ENCODE measurements at regions of chr2 and their contacts with region 1.

Region 1: DNA sequence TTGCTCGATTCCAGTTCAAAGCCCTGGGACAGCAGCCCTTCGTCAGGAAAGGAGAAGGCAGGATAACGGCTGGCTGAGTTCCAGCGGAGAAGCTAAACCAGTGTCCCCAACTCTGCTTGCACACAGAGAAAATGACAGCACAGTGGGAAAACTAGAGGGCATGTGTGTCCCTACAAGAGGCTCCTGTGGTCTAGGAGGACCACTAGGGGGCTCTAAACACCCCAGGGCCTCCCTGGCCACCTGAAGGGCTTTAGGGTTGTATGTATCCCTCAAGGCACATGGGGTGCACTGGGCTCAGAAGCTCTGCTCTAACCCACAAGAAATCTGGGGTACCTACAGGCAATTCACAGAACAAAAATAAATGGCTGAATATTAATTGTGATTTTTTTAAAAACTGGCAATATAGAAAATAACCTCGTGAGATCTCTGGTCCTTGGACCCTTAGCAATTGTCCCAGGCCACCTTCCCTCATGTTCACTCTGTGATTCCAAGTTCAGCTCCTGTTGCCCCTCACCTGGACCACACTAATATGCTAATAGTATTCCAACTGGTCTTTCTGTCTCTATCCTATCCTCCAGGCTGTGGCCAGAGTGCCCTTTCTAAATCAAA is 17.5 kb downstream of the STAT1 start:
- DNase-seq: peak in 6 of 9 donors; percentile 28 to 52 (median 35)
- ATAC-seq: peak; percentile 83
- H3K4me3 ChIP-seq: no peak overlapping the region
- H3K4me3 Mint-ChIP-seq: peak overlapping the region in 1 of 10 donors; percentile 28
- H3K27ac ChIP-seq: peak overlapping the region; percentile 34
- H3K27ac Mint-ChIP-seq: peak overlapping the region; percentile 52 to 92 (median 81)
- H3K4me1 ChIP-seq: peaks cover 3 to 7% of the 10 kb centered on the region in 2 donors
- H3K4me1 Mint-ChIP-seq: peaks cover 28 to 80% (median 55%) of the 10 kb centered on the region in 7 donors
- H3K27me3 ChIP-seq: no peaks in the 10 kb centered on the region
- H3K27me3 Mint-ChIP-seq: no peaks in the 10 kb centered on the region

Region 2: GRCh38 chr2:191020221-191020741 is 23.8 kb after region 1 on chr2:
- CTCF ChIA-PET with region 1: interaction called, 3 read pairs
- POLR2A ChIA-PET with region 1: interaction called, 6 read pairs
- intact Hi-C with region 1: loop called in 1 of 2 experiments (anchors 1 kb)
- DNase-seq: peak; percentile 89 to 99 (median 94)
- ATAC-seq: peak; percentile 88
- H3K4me3 ChIP-seq: peak overlapping the region; percentile 78
- H3K4me3 Mint-ChIP-seq: no peak overlapping the region
- H3K27ac ChIP-seq: peak overlapping the region; percentile 82
- H3K27ac Mint-ChIP-seq: no peak overlapping the region
- H3K4me1 ChIP-seq: peaks cover 44 to 48% of the 10 kb centered on the region in 2 donors
- H3K4me1 Mint-ChIP-seq: peaks cover 11 to 46% (median 32%) of the 10 kb centered on the region in 7 donors
- H3K27me3 ChIP-seq: no peaks in the 10 kb centered on the region
- H3K27me3 Mint-ChIP-seq: peaks cover 0 to 2% (median 0%) of the 10 kb centered on the region in 5 donors